MCF 10A (cell line): ENCODE measurements at regions of chr18 and their contacts with region 1.

Region 1: GRCh38 chr18:23635283-23636070 is 27.2 kb downstream of the ANKRD29 start:
- DNase-seq: peak; percentile 65
- H3K4me3 Mint-ChIP-seq: no peak overlapping the region
- H3K27ac Mint-ChIP-seq: peak overlapping the region; percentile 55
- H3K4me1 Mint-ChIP-seq: peaks cover 24% of the 10 kb centered on the region
- H3K27me3 Mint-ChIP-seq: no peaks in the 10 kb centered on the region
- CTCF ChIP-seq: no peak

Region 2: GRCh38 chr18:23689031-23689615 is 53.6 kb after region 1 on chr18 and contains the start of gene LAMA3:
- CTCF ChIA-PET with region 1: interaction called, 4 read pairs
- POLR2A ChIA-PET with region 1: interaction called, 4 read pairs
- intact Hi-C with region 1: loop called (anchors 5 kb)
- DNase-seq: peak; percentile 58
- H3K4me3 Mint-ChIP-seq: peak within 1 kb of the TSS; percentile 70
- H3K27ac Mint-ChIP-seq: no peak within 1 kb of the TSS
- H3K4me1 Mint-ChIP-seq: no peaks in the 10 kb centered on the region
- H3K27me3 Mint-ChIP-seq: no peaks in the 10 kb centered on the region
- CTCF ChIP-seq: peak; percentile 9
- total RNA-seq, gene LAMA3: 269 and 371 TPM in 2 replicates

Region 3: DNA sequence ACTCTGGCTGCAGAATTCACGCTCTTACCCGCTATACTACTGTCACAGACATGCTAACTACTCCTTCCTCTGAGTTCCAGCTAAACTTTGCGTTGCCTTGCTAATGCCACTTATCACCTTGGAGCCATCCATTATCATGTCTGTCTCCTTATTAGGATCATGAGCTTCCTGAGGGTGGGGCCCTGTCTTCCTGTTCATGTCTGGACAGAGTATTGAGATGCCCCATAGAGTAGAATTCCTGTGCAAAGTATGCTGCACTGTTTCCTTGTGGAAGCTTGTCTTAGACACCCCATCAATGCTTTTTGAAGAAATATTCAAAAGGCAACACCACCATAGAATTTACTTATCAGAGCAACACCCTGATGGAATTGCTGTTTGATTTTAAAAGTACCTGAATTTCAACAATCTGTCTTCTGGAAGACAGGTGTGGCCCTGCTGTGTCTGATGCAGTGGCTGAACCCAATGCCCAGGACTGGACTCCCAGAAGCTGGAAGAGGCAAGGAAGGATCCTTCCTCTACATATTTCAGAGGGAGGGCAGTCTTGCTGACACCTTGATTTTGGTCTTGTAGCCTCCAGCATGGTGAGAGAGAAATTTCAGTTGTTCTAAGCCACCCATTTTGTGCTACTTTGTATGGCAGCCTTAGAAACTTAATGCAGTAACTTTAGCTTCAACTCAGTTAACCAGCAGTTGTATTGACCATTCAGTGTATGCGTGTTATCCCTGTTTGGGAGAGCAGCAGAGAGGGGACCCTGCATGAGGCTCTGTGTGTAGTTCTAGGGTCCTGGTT is 59.4 kb after region 1 on chr18:
- CTCF ChIA-PET with region 1: interaction called, 4 read pairs
- POLR2A ChIA-PET with region 1: interaction called, 13 read pairs
- intact Hi-C with region 1: no loop called
- DNase-seq: no peak
- H3K4me3 Mint-ChIP-seq: no peak overlapping the region
- H3K27ac Mint-ChIP-seq: no peak overlapping the region
- H3K4me1 Mint-ChIP-seq: peaks cover 10% of the 10 kb centered on the region
- H3K27me3 Mint-ChIP-seq: no peaks in the 10 kb centered on the region
- CTCF ChIP-seq: no peak